ENCODE measurements at regions of chr3 and their contacts with region 1.

Region 1: GRCh38 chr3:44439499-44440295 is 37.8 kb downstream of the ZNF445 start:
- DNase-seq: peak; percentile 97
- ATAC-seq: peak; percentile 99
- H3K4me3 ChIP-seq: peak overlapping the region; percentile 21 to 54 (median 54)
- H3K27ac ChIP-seq: peak overlapping the region; percentile 93
- H3K4me1 ChIP-seq: peaks cover 45% of the 10 kb centered on the region
- H3K27me3 ChIP-seq: no peaks in the 10 kb centered on the region
- CTCF ChIP-seq: peak; percentile 17
- EP300 ChIP-seq: peak; percentile 68 to 82; a peak in 3 of 4 replicates
- POLR2A ChIP-seq: peak; percentile 36 to 42; a peak in 2 of 4 replicates
- RAD21 ChIP-seq: no peak; the same call in 1 of the 2 replicates

Region 2: DNA sequence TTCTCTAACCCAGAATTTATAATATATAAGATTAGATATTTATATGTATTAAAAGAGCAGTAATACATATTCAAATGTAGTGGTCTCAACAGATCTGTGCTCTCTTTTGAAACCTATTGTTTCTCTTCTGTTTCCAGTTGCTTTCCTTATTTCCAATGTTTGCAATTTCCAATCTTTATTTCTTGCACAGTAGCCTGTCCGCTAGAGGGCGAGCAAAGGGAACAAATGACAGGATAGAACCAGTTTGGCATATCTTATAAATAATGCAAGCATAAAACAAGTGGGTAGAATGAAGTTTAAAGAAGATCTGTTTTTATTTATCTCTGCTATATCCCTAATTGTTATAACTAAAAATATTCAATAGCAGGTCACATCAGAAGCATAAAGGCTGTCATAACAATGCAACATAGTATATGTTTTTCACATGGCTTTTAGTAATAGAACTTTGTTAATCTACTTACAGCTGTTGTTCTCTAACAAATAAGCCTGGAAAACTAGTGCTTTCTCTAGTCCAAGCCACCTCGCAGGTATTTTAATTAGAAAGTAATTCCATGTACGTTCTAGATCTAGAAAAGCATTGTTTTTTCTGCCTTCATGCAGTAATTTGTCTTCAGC is 116.2 kb before region 1 on chr3:
- CTCF ChIA-PET with region 1: no interaction called
- POLR2A ChIA-PET with region 1: interaction called, 8 read pairs
- in situ Hi-C with region 1: loop called (anchors 10 kb)
- intact Hi-C with region 1: loop called (anchors 5 kb)
- DNase-seq: peak; percentile 55
- ATAC-seq: no peak
- H3K4me3 ChIP-seq: no peak overlapping the region
- H3K27ac ChIP-seq: no peak overlapping the region
- H3K4me1 ChIP-seq: peaks cover 22% of the 10 kb centered on the region
- H3K27me3 ChIP-seq: no peaks in the 10 kb centered on the region; a peak in 1 of 5 replicates
- CTCF ChIP-seq: peak; percentile 83
- EP300 ChIP-seq: no peak
- POLR2A ChIP-seq: no peak
- RAD21 ChIP-seq: peak; percentile 71; the same call in 1 of the 2 replicates

Region 3: DNA sequence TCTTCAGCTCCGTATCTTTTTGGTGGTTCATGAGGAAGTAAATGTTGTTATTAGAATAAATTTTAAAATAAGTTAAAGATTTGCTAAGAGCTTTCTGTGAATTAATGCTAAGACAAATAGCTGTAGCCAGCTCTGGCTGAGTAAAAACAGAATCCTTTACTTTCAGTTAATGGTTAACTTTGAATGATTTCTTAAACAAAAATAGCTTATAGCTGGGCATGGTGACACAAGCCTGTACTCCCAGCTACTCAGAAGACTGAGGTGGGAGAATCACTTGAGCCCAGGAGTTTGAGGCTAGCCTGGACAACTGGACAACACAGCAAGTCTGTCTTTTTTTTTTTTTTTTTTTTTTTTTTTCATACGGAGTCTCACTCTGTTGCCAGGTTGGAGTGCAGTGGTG is 76.1 kb before region 1 on chr3:
- CTCF ChIA-PET with region 1: no interaction called
- POLR2A ChIA-PET with region 1: interaction called, 23 read pairs
- in situ Hi-C with region 1: no loop called
- intact Hi-C with region 1: no loop called
- DNase-seq: peak; percentile 82
- ATAC-seq: peak; percentile 83
- H3K4me3 ChIP-seq: peak overlapping the region in 2 of 3 experiments; percentile 40 to 42; a peak in 2 of 6 replicates
- H3K27ac ChIP-seq: peak overlapping the region; percentile 52
- H3K4me1 ChIP-seq: peaks cover 64% of the 10 kb centered on the region
- H3K27me3 ChIP-seq: no peaks in the 10 kb centered on the region
- CTCF ChIP-seq: no peak
- EP300 ChIP-seq: peak in 1 of 2 experiments; percentile 45; a peak in 1 of 4 replicates
- POLR2A ChIP-seq: no peak
- RAD21 ChIP-seq: no peak

Region 4: GRCh38 chr3:44455318-44455717 is 15.6 kb after region 1 on chr3:
- CTCF ChIA-PET with region 1: no interaction called
- POLR2A ChIA-PET with region 1: interaction called, 17 read pairs
- in situ Hi-C with region 1: no loop called
- intact Hi-C with region 1: no loop called
- DNase-seq: no peak
- ATAC-seq: no peak
- H3K4me3 ChIP-seq: no peak overlapping the region
- H3K27ac ChIP-seq: peak overlapping the region; percentile 72
- H3K4me1 ChIP-seq: peaks cover 18% of the 10 kb centered on the region
- H3K27me3 ChIP-seq: no peaks in the 10 kb centered on the region
- CTCF ChIP-seq: no peak
- EP300 ChIP-seq: no peak
- POLR2A ChIP-seq: no peak
- RAD21 ChIP-seq: no peak

Region 5: DNA sequence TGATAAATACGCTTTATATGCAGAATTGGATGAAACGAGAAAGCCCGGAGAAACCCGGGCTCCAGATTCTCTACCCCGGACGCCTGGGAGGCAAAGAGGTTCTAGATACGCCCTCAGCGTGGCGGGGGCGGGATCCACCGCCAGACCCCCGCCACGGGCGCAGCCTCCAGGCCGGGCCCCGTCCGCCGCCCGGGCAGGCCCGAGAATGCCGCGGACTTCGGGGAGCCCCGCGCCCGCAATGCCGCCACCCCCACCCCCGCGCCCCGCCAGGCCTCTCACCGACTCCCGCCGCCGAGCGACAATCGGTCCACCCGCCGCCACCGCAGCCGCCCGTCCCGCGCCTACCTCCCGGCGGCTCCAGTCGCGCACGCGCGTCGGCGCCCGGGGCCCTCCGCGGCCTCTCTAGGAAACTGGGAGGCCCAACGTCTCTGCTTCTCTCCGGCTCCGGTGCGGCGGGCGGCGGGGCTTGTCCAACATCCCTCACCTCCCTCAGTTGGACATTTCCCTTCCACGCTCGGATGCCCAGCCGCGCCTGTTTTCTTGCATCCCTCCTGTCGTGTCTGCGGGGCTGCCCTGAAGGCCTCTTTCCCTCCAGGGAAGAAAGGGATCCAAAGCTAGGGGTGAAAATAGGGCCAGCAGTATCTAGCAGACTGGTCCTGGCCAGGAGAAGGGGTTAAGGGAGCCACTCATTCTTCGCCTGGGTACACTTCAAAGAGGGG is 37.8 kb after region 1 on chr3 and contains the start of gene ZNF445:
- CTCF ChIA-PET with region 1: no interaction called
- POLR2A ChIA-PET with region 1: interaction called, 26 read pairs
- in situ Hi-C with region 1: no loop called
- intact Hi-C with region 1: loop called (anchors 1 kb)
- DNase-seq: peak; percentile 67
- ATAC-seq: peak; percentile 85
- H3K4me3 ChIP-seq: peak within 1 kb of the TSS; percentile 81 to 92 (median 87)
- H3K27ac ChIP-seq: peak within 1 kb of the TSS; percentile 88
- H3K4me1 ChIP-seq: peaks cover 56% of the 10 kb centered on the region
- H3K27me3 ChIP-seq: no peaks in the 10 kb centered on the region; a peak in 1 of 5 replicates
- CTCF ChIP-seq: no peak; the same call in 1 of the 2 replicates
- EP300 ChIP-seq: no peak
- POLR2A ChIP-seq: peak; percentile 26 to 60; a peak in 2 of 4 replicates
- RAD21 ChIP-seq: no peak
- total RNA-seq, gene ZNF445: 10.3 and 11.8 TPM in 2 replicates

Region 6: DNA sequence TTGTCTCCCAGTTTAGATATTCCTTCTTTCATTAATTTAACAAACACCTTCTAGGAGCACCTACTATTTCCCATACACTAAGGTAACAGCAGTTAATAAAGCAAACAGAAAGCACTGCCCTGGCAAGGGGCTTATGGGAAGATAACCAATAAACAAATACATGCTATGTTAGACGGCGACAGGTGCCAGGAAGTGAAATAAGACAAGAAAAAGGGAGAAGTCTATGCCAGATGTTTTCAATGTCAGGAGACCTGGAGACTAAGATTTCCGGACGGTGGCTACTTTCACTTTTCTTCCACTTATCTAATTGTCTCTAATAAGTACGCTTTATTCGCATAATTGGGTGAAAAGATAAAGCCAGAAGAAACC is 70.3 kb after region 1 on chr3:
- CTCF ChIA-PET with region 1: no interaction called
- POLR2A ChIA-PET with region 1: interaction called, 11 read pairs
- in situ Hi-C with region 1: no loop called
- intact Hi-C with region 1: no loop called
- DNase-seq: no peak
- ATAC-seq: no peak; the same call in 2 of the 3 replicates
- H3K4me3 ChIP-seq: peak overlapping the region; percentile 73 to 99 (median 86)
- H3K27ac ChIP-seq: peak overlapping the region; percentile 73
- H3K4me1 ChIP-seq: peaks cover 59% of the 10 kb centered on the region
- H3K27me3 ChIP-seq: no peaks in the 10 kb centered on the region; a peak in 1 of 5 replicates
- CTCF ChIP-seq: no peak
- EP300 ChIP-seq: no peak
- POLR2A ChIP-seq: peak in 1 of 2 experiments; percentile 28; a peak in 1 of 4 replicates
- RAD21 ChIP-seq: no peak

Region 7: GRCh38 chr3:44861412-44862220 is 421.9 kb after region 1 on chr3 and contains the start of gene TMEM42:
- CTCF ChIA-PET with region 1: no interaction called
- POLR2A ChIA-PET with region 1: no interaction called
- in situ Hi-C with region 1: no loop called
- intact Hi-C with region 1: no loop called
- DNase-seq: peak; percentile 74
- ATAC-seq: peak; percentile 96
- H3K4me3 ChIP-seq: peak within 1 kb of the TSS; percentile 59 to 76 (median 64)
- H3K27ac ChIP-seq: peak within 1 kb of the TSS; percentile 74
- H3K4me1 ChIP-seq: peaks cover 9% of the 10 kb centered on the region
- H3K27me3 ChIP-seq: no peaks in the 10 kb centered on the region
- CTCF ChIP-seq: peak; percentile 63
- EP300 ChIP-seq: no peak
- POLR2A ChIP-seq: peak; percentile 84 to 87
- RAD21 ChIP-seq: no peak
- total RNA-seq, gene TMEM42: 5.0 and 5.5 TPM in 2 replicates

Measured in HepG2 (cell line).